CD8-positive, alpha-beta memory T cell (primary cell): ENCODE measurements at regions of chr15 and their contacts with region 1.

Region 1: GRCh38 chr15:40857601-40858341 is 13.9 kb downstream of the SPINT1 start:
- DNase-seq: peak; percentile 65 to 83 (median 67)
- H3K4me3 ChIP-seq: no peak overlapping the region
- H3K4me3 Mint-ChIP-seq: no peak overlapping the region
- H3K27ac ChIP-seq: no peak overlapping the region
- H3K27ac Mint-ChIP-seq: peak overlapping the region in 3 of 8 donors; percentile 8 to 41 (median 24)
- H3K4me1 ChIP-seq: no peaks in the 10 kb centered on the region
- H3K4me1 Mint-ChIP-seq: peaks cover 6 to 15% (median 8%) of the 10 kb centered on the region in 3 donors
- H3K27me3 ChIP-seq: no peaks in the 10 kb centered on the region
- H3K27me3 Mint-ChIP-seq: peaks cover 2 to 11% of the 10 kb centered on the region in 2 donors

Region 2: GRCh38 chr15:40847205-40847961 is 10.4 kb before region 1 on chr15:
- CTCF ChIA-PET with region 1: interaction called, 64 read pairs
- POLR2A ChIA-PET with region 1: no interaction called
- DNase-seq: no peak
- H3K4me3 ChIP-seq: no peak overlapping the region
- H3K4me3 Mint-ChIP-seq: peak overlapping the region in 2 of 7 donors; percentile 25 to 71
- H3K27ac ChIP-seq: peak overlapping the region; percentile 59
- H3K27ac Mint-ChIP-seq: peak overlapping the region in 2 of 8 donors; percentile 36 to 91
- H3K4me1 ChIP-seq: peaks cover 17% of the 10 kb centered on the region
- H3K4me1 Mint-ChIP-seq: peaks cover 5 to 26% (median 11%) of the 10 kb centered on the region in 3 donors
- H3K27me3 ChIP-seq: no peaks in the 10 kb centered on the region
- H3K27me3 Mint-ChIP-seq: peaks cover 11% of the 10 kb centered on the region in 2 donors

Region 3: DNA sequence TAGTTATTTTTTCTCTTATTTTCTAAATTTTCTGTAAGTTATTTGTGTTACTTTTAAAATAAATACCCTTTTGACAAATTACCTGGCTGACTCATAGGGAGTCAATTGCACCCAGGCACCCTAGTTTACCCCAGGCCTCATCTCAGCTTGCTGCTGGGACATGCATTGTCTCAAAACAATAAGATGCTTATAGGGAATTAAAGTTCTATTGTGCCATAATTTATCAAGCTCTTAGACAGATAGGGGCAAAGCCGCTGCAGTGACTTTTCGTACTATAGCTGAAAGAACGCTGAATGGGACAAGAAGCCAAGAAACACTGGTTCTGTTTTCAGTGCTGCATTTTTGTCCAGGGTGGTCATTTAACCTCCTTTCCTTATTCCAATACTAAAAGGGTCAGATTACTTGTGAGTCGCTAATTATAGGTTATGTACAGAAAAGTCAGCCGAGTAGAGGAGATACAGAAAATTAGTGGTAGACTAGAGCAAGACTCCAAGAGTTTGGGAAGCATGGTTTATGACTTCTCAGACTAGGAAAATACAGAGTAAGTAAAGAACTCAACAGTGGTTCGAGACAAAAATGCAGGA is 322.5 kb after region 1 on chr15:
- CTCF ChIA-PET with region 1: interaction called, 12 read pairs
- POLR2A ChIA-PET with region 1: no interaction called
- DNase-seq: no peak
- H3K4me3 ChIP-seq: no peak overlapping the region
- H3K4me3 Mint-ChIP-seq: no peak overlapping the region
- H3K27ac ChIP-seq: no peak overlapping the region
- H3K27ac Mint-ChIP-seq: no peak overlapping the region
- H3K4me1 ChIP-seq: no peaks in the 10 kb centered on the region
- H3K4me1 Mint-ChIP-seq: no peaks in the 10 kb centered on the region
- H3K27me3 ChIP-seq: no peaks in the 10 kb centered on the region
- H3K27me3 Mint-ChIP-seq: peaks cover 0 to 7% of the 10 kb centered on the region in 2 donors